ENCODE measurements at regions of chr10 and their contacts with region 1.

Region 1: DNA sequence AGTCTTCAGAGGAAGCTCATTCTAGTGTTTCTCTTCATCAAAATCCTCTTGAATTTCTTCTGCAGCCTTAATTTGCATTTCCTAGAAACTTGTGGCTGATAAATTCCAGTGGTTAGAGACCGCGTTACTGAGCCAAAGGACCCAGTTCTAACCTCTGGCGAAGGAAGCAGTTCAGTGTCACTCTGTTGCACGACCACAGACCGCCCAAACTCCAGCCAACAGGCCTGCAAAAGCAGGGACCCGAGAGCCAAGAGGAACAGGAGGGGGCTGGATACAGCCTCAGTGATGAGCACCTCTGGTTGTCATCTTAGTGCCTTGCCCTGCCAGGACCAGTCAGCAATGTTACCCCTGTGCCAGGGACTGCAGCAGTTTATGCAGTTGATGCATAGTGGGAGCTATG is 70.0 kb downstream of the AFAP1L2 start:
- DNase-seq: no peak
- ATAC-seq: no peak
- H3K4me3 ChIP-seq: no peak overlapping the region
- H3K27ac ChIP-seq: no peak overlapping the region
- H3K4me1 ChIP-seq: peaks cover 6 to 37% (median 17%) of the 10 kb centered on the region in 9 donors
- H3K27me3 ChIP-seq: no peaks in the 10 kb centered on the region
- CTCF ChIP-seq: no peak

Region 2: DNA sequence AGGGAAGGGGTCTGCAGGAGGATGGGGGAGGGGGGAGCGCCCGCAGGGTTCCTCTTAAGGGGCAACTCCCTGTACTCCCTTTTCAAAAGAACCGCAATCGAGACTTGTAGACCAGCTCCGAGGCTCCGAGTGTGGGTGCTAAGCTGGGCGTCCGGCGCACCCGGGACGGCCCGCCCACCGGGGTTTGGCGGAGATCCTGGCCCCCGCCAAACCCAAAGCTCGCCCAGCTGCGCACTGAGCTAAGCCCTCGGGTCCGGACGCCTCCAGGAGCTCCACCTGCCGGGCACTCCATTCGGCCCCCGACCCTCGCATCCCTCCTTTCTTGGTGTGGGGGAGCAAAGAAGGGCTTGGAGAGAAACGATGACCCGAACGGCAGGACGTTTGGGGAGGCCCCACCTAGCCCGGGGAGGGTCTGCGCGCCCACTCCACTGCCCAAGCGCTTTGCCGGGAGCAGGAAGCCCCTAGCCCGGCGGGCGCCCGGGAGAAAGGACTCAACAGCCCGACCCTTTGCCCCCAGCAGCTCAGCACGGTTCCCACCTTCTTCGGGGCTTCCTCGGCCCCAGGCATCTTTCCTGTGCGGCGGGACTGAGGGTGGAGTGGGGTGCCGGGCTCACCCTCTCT is 69.3 kb after region 1 on chr10:
- intact Hi-C with region 1: loop called in 2 of 10 experiments (anchors 5 kb)
- DNase-seq: peak in 1 of 2 donors; percentile 51
- ATAC-seq: peak; percentile 50 to 81 (median 70)
- H3K4me3 ChIP-seq: peak overlapping the region; percentile 50 to 70 (median 62)
- H3K27ac ChIP-seq: peak overlapping the region in 9 of 10 donors; percentile 41 to 82 (median 63)
- H3K4me1 ChIP-seq: peaks cover 2 to 63% (median 44%) of the 10 kb centered on the region in 9 donors
- H3K27me3 ChIP-seq: peaks cover 0 to 61% (median 8%) of the 10 kb centered on the region in 7 donors
- CTCF ChIP-seq: peak in 7 of 9 donors; percentile 18 to 58 (median 33)

Measured in heart right ventricle (tissue), 16 donors.